H1 (cell line): ENCODE measurements at regions of chr6 and their contacts with region 1.

Region 1: GRCh38 chr6:30730601-30731435 is 10.7 kb downstream of the TUBB start:
- DNase-seq: peak in 1 of 2 experiments; percentile 87
- H3K4me3 ChIP-seq: no peak overlapping the region
- H3K27ac ChIP-seq: no peak overlapping the region
- H3K4me1 ChIP-seq: no peaks in the 10 kb centered on the region
- H3K27me3 ChIP-seq: no peaks in the 10 kb centered on the region
- CTCF ChIP-seq: peak; percentile 71 to 78 (median 73)
- EP300 ChIP-seq: no peak
- POLR2A ChIP-seq: no peak
- RAD21 ChIP-seq: peak; percentile 79 to 85

Region 2: DNA sequence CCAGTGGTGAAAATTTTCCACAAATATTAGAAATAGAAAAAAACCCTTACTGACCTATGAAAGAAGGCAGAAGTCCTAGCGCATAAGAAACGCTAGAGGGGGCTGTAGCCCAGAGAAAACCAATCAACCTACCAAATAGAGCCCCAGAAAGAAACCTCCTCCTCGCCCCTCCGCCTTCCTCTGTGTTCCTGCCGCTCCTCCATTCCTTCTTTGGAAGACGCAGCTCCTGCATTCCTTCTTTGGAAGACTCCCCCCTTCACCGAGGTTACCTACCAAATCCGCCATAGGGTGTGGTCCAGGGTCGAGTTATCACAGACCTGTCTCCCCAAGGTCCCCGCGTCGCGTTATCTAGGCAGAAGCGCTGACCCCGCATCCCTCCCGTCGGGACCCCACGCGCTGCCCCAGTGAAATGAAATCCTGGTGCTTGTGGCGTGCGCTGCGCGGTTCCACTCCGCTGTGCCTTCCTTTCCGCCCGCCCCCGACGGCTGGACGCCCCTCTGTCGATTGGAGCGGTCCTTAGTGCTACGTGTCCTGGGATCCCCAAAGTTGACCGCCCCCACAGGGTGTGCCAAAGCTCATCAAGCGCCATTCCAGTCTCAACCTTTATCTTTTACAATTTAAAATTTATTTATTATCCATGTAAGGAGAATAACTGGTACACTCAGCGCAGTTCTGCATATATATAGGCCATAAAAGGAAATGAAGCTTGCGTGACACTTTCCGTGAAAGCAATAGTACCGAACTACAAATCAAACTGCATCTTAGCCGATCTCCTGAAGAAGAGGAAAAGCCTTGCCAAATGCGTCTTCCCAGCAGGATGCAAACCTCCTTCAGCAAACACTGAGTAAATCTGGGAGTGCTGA is 372.9 kb before region 1 on chr6:
- CTCF ChIA-PET with region 1: no interaction called
- POLR2A ChIA-PET with region 1: no interaction called
- DNase-seq: peak; percentile 71 to 79
- H3K4me3 ChIP-seq: peak overlapping the region; percentile 51 to 80 (median 76)
- H3K27ac ChIP-seq: no peak overlapping the region
- H3K4me1 ChIP-seq: peaks cover 0 to 6% (median 2%) of the 10 kb centered on the region in 4 experiments; a peak in 4 of 7 replicates
- H3K27me3 ChIP-seq: peaks cover 0 to 4% (median 2%) of the 10 kb centered on the region in 4 experiments; a peak in 3 of 7 replicates
- CTCF ChIP-seq: peak in 2 of 3 experiments; percentile 73 to 80; a peak in 3 of 4 replicates
- EP300 ChIP-seq: no peak
- POLR2A ChIP-seq: peak in 1 of 2 experiments; percentile 36; a peak in 2 of 3 replicates
- RAD21 ChIP-seq: peak; percentile 78 to 79

Region 3: DNA sequence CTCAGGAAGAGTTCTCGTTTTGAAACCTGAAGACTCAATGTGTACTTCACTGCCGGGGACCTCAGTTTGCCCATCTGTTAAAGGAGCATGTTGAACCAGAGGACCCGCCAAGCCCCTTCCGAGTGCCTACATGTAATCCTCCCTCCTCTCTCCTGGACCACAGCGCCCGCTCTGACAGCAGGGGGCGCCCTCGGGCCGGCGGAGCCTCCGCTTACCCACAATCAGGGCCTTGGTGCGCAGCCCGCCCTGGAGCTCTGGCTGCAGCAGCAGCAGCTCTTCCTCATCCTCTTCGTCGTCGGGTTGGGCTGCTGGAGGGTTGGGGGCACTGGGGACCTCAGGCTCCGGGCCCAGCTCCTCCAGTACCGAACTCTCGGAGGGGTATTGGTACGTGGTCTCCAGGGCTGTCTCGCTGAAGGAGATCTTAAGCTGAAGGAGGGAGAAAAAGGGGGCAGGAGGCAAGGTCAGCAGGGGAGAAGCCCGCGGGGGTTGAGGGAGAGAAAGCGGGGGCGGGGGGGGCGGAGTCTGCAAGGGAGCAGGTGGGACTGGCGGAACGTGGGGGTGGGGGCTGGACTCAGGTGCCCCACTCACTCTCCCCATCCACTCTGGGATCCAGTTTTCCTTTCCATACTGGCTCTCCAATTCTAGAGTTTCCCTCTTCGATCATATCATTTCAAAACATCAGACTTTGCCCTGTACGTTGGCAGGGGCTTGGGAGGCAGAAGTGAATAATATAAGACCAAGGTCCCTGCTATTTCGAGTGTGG is 51.7 kb before region 1 on chr6:
- CTCF ChIA-PET with region 1: interaction called, 147 read pairs
- POLR2A ChIA-PET with region 1: interaction called, 388 read pairs
- DNase-seq: peak in 1 of 2 experiments; percentile 98
- H3K4me3 ChIP-seq: peak overlapping the region in 1 of 4 experiments; percentile 50; a peak in 4 of 8 replicates
- H3K27ac ChIP-seq: no peak overlapping the region
- H3K4me1 ChIP-seq: peaks cover 7 to 17% (median 12%) of the 10 kb centered on the region in 4 experiments
- H3K27me3 ChIP-seq: no peaks in the 10 kb centered on the region
- CTCF ChIP-seq: peak in 2 of 3 experiments; percentile 96 to 97; a peak in 3 of 4 replicates
- EP300 ChIP-seq: no peak; a peak in 1 of 3 replicates
- POLR2A ChIP-seq: no peak
- RAD21 ChIP-seq: peak; percentile 91 to 96

Region 4: DNA sequence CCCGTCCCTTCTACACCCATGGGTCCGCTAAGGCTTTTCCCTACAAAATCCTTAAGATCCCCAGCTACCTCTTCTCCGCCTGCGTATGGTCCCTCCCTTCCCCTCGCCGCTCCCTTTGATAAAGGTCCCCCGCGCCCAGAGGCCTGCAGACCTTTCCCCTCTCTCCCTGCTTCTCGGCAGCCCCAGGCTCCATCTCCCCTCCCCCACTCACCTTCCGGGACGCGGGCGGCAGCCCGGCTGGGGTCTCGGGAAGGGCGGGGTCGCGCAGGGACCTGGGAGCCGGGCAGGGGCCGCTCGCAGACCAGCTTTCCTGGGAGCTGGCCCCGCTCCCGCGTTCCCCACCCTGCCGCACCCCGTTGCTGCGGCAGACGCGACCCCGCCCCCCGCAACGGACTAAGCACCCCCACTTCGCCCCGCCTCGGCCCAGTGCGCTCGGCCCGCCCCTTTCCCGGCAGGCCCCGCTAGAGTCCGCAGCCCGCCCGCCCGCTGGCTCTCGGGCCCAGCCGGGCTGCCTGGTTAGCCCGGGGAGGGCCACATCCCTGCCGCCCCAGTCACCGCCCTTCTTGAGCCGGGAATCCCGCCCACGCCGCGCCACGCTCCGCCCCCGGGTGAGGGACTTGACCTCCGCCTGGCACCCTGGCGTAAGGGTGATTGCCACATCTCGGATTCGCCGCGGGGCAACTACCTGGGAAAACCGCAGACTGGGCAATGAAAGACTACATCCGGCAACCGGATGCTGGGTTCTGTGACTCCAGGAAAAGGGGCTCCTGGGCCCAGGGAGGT is 11.7 kb after region 1 on chr6 and contains the start of gene FLOT1:
- CTCF ChIA-PET with region 1: interaction called, 26 read pairs
- POLR2A ChIA-PET with region 1: interaction called, 337 read pairs
- DNase-seq: peak; percentile 87 to 97
- H3K4me3 ChIP-seq: peak within 1 kb of the TSS; percentile 76 to 95 (median 88)
- H3K27ac ChIP-seq: peak within 1 kb of the TSS; percentile 54; the same call in 1 of the 2 replicates
- H3K4me1 ChIP-seq: peaks cover 3 to 18% (median 7%) of the 10 kb centered on the region in 4 experiments; a peak in 6 of 7 replicates
- H3K27me3 ChIP-seq: no peaks in the 10 kb centered on the region; a peak in 1 of 7 replicates
- CTCF ChIP-seq: no peak
- EP300 ChIP-seq: no peak
- POLR2A ChIP-seq: peak; percentile 24 to 47
- RAD21 ChIP-seq: peak; percentile 2 to 4; a peak in 2 of 4 replicates
- total RNA-seq, gene FLOT1: 85.4 and 87.5 TPM in 2 replicates